CD8-positive, alpha-beta memory T cell (primary cell): ENCODE measurements at regions of chr11 and their contacts with region 1.

Region 1: GRCh38 chr11:62787005-62787759 is at the start of gene TMEM179B:
- DNase-seq: peak; percentile 97 to 99 (median 97)
- H3K4me3 ChIP-seq: peak within 1 kb of the TSS; percentile 98
- H3K4me3 Mint-ChIP-seq: peak within 1 kb of the TSS; percentile 94 to 97 (median 95)
- H3K27ac ChIP-seq: peak within 1 kb of the TSS; percentile 96
- H3K27ac Mint-ChIP-seq: peak within 1 kb of the TSS; percentile 95 to 100 (median 96)
- H3K4me1 ChIP-seq: peaks cover 30% of the 10 kb centered on the region
- H3K4me1 Mint-ChIP-seq: peaks cover 41 to 55% (median 51%) of the 10 kb centered on the region in 3 donors
- H3K27me3 ChIP-seq: no peaks in the 10 kb centered on the region
- H3K27me3 Mint-ChIP-seq: no peaks in the 10 kb centered on the region
- total RNA-seq, gene TMEM179B: 46.4 to 49.2 TPM

Region 2: GRCh38 chr11:62726915-62727763 is 60.0 kb before region 1 on chr11 and contains the start of gene HNRNPUL2:
- CTCF ChIA-PET with region 1: interaction called, 16 read pairs
- POLR2A ChIA-PET with region 1: interaction called, 27 read pairs
- DNase-seq: peak; percentile 98 to 99 (median 99)
- H3K4me3 ChIP-seq: peak within 1 kb of the TSS; percentile 99
- H3K4me3 Mint-ChIP-seq: peak within 1 kb of the TSS; percentile 92 to 99 (median 98)
- H3K27ac ChIP-seq: peak within 1 kb of the TSS; percentile 90
- H3K27ac Mint-ChIP-seq: peak within 1 kb of the TSS; percentile 95 to 99 (median 98)
- H3K4me1 ChIP-seq: peaks cover 43% of the 10 kb centered on the region
- H3K4me1 Mint-ChIP-seq: peaks cover 55 to 64% (median 63%) of the 10 kb centered on the region in 3 donors
- H3K27me3 ChIP-seq: no peaks in the 10 kb centered on the region
- H3K27me3 Mint-ChIP-seq: peaks cover 0 to 3% of the 10 kb centered on the region in 2 donors
- total RNA-seq, gene HNRNPUL2: 58.7 to 64.3 TPM

Region 3: GRCh38 chr11:62771144-62772021 is 15.8 kb before region 1 on chr11 and contains the start of gene TAF6L:
- CTCF ChIA-PET with region 1: interaction called, 74 read pairs
- POLR2A ChIA-PET with region 1: interaction called, 20 read pairs
- DNase-seq: peak; percentile 83 to 93 (median 87)
- H3K4me3 ChIP-seq: peak within 1 kb of the TSS; percentile 42
- H3K4me3 Mint-ChIP-seq: peak within 1 kb of the TSS; percentile 87 to 96 (median 93)
- H3K27ac ChIP-seq: peak within 1 kb of the TSS; percentile 75
- H3K27ac Mint-ChIP-seq: peak within 1 kb of the TSS; percentile 85 to 99 (median 95)
- H3K4me1 ChIP-seq: peaks cover 22% of the 10 kb centered on the region
- H3K4me1 Mint-ChIP-seq: peaks cover 18 to 30% (median 28%) of the 10 kb centered on the region in 3 donors
- H3K27me3 ChIP-seq: no peaks in the 10 kb centered on the region
- H3K27me3 Mint-ChIP-seq: no peaks in the 10 kb centered on the region
- total RNA-seq, gene TAF6L: 21.8 to 24.1 TPM

Region 4: GRCh38 chr11:62805076-62805892 is 18.1 kb after region 1 on chr11 and contains the start of gene NXF1:
- CTCF ChIA-PET with region 1: interaction called, 20 read pairs
- POLR2A ChIA-PET with region 1: interaction called, 14 read pairs
- DNase-seq: peak; percentile 94 to 98 (median 95)
- H3K4me3 ChIP-seq: peak within 1 kb of the TSS; percentile 70
- H3K4me3 Mint-ChIP-seq: peak within 1 kb of the TSS; percentile 96 to 99 (median 99)
- H3K27ac ChIP-seq: peak within 1 kb of the TSS; percentile 95
- H3K27ac Mint-ChIP-seq: peak within 1 kb of the TSS; percentile 95 to 99 (median 97)
- H3K4me1 ChIP-seq: peaks cover 26% of the 10 kb centered on the region
- H3K4me1 Mint-ChIP-seq: peaks cover 26 to 44% (median 30%) of the 10 kb centered on the region in 3 donors
- H3K27me3 ChIP-seq: no peaks in the 10 kb centered on the region
- H3K27me3 Mint-ChIP-seq: peaks cover 0 to 3% of the 10 kb centered on the region in 2 donors
- total RNA-seq, gene NXF1: 112 to 126 TPM

Region 5: GRCh38 chr11:62841361-62842184 is 54.4 kb after region 1 on chr11:
- CTCF ChIA-PET with region 1: interaction called, 30 read pairs
- POLR2A ChIA-PET with region 1: interaction called, 88 read pairs
- DNase-seq: peak; percentile 69 to 90 (median 88)
- H3K4me3 ChIP-seq: peak overlapping the region; percentile 67
- H3K4me3 Mint-ChIP-seq: no peak overlapping the region
- H3K27ac ChIP-seq: peak overlapping the region; percentile 98
- H3K27ac Mint-ChIP-seq: no peak overlapping the region
- H3K4me1 ChIP-seq: peaks cover 23% of the 10 kb centered on the region
- H3K4me1 Mint-ChIP-seq: peaks cover 22 to 28% (median 27%) of the 10 kb centered on the region in 3 donors
- H3K27me3 ChIP-seq: no peaks in the 10 kb centered on the region
- H3K27me3 Mint-ChIP-seq: peaks cover 0 to 1% of the 10 kb centered on the region in 2 donors

Region 6: GRCh38 chr11:62860835-62861563 is 73.8 kb after region 1 on chr11:
- CTCF ChIA-PET with region 1: interaction called, 56 read pairs
- POLR2A ChIA-PET with region 1: interaction called, 37 read pairs
- DNase-seq: peak in 1 of 5 donors; percentile 3
- H3K4me3 ChIP-seq: no peak overlapping the region
- H3K4me3 Mint-ChIP-seq: no peak overlapping the region
- H3K27ac ChIP-seq: peak overlapping the region; percentile 38
- H3K27ac Mint-ChIP-seq: peak overlapping the region in 2 of 8 donors; percentile 17 to 91
- H3K4me1 ChIP-seq: peaks cover 8% of the 10 kb centered on the region
- H3K4me1 Mint-ChIP-seq: peaks cover 9 to 17% (median 17%) of the 10 kb centered on the region in 3 donors
- H3K27me3 ChIP-seq: no peaks in the 10 kb centered on the region
- H3K27me3 Mint-ChIP-seq: peaks cover 0 to under 1% of the 10 kb centered on the region in 2 donors

Region 7: GRCh38 chr11:63243533-63243932 is 456.4 kb after region 1 on chr11 and contains the start of gene SLC22A25:
- CTCF ChIA-PET with region 1: no interaction called
- POLR2A ChIA-PET with region 1: no interaction called
- DNase-seq: no peak
- H3K4me3 ChIP-seq: no peak within 1 kb of the TSS
- H3K4me3 Mint-ChIP-seq: no peak within 1 kb of the TSS
- H3K27ac ChIP-seq: no peak within 1 kb of the TSS
- H3K27ac Mint-ChIP-seq: peak within 1 kb of the TSS in 1 of 8 donors; percentile 77
- H3K4me1 ChIP-seq: peaks cover 17% of the 10 kb centered on the region
- H3K4me1 Mint-ChIP-seq: peaks cover 3 to 12% (median 4%) of the 10 kb centered on the region in 3 donors
- H3K27me3 ChIP-seq: peaks cover 11% of the 10 kb centered on the region
- H3K27me3 Mint-ChIP-seq: peaks cover 29 to 75% of the 10 kb centered on the region in 2 donors
- total RNA-seq, gene SLC22A25: not detected